Activated B cell treated with CpG ODN at 0.5 μM for 24 hours (primary cell): ENCODE measurements at regions of chr11 and their contacts with region 1.

Region 1: DNA sequence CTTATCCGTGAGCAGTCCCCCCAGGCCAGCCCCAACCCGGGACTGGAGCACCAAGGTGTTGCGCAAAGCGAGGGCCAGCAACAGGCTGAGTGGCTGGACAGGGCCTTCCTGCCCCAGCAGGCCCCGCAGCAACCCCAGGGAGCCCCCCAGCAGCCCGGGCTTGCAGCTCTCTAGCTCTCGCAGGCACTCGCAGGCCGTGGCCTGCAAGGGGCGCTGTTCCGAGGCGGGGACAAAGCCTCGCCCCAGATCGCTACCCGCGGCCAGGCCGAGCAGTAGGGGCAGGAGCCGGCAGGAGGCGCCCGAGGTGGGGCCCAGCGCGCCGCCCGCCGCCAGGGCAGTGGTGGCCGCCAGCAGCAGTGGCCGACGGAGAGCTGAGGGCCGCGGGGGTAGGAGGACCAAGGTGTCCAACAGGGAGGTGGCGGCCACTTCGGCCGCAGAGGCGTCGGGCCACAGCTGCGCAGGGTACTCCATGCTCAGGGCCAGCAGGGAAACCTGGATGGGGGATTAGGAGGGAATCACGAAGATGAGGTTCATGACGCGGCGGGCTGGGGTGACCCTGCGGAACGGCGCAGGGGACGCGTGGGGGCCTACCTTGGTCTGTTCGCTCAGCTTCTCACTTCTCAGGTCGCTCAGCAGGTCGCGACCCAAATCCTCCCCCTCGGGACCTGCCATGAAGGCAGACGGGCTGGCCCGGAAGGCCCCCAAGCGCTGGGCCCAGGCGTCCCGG is 762 bp downstream of the AP5B1 start:
- DNase-seq: peak; percentile 78
- ATAC-seq: peak; percentile 63
- H3K4me3 Mint-ChIP-seq: peak overlapping the region; percentile 86
- H3K27ac Mint-ChIP-seq: peak overlapping the region; percentile 59
- H3K4me1 Mint-ChIP-seq: peaks cover 13% of the 10 kb centered on the region
- H3K27me3 Mint-ChIP-seq: no peaks in the 10 kb centered on the region
- CTCF ChIP-seq: no peak

Region 2: GRCh38 chr11:65720237-65720934 is 59.6 kb before region 1 on chr11 and contains the start of gene RNASEH2C:
- CTCF ChIA-PET with region 1: interaction called, 4 read pairs
- POLR2A ChIA-PET with region 1: interaction called, 6 read pairs
- intact Hi-C with region 1: loop called (anchors 2 kb)
- DNase-seq: peak; percentile 75
- ATAC-seq: peak; percentile 92
- H3K4me3 Mint-ChIP-seq: peak within 1 kb of the TSS; percentile 94
- H3K27ac Mint-ChIP-seq: peak within 1 kb of the TSS; percentile 83
- H3K4me1 Mint-ChIP-seq: peaks cover 29% of the 10 kb centered on the region
- H3K27me3 Mint-ChIP-seq: no peaks in the 10 kb centered on the region
- CTCF ChIP-seq: no peak
- total RNA-seq, gene RNASEH2C: 85.3 and 91.4 TPM in 2 replicates

Region 3: GRCh38 chr11:65791691-65792213 is 11.7 kb after region 1 on chr11:
- CTCF ChIA-PET with region 1: interaction called, 41 read pairs
- POLR2A ChIA-PET with region 1: interaction called, 46 read pairs
- intact Hi-C with region 1: loop called (anchors 1 kb)
- DNase-seq: peak; percentile 52
- ATAC-seq: peak; percentile 93
- H3K4me3 Mint-ChIP-seq: no peak overlapping the region
- H3K27ac Mint-ChIP-seq: peak overlapping the region; percentile 80
- H3K4me1 Mint-ChIP-seq: peaks cover 40% of the 10 kb centered on the region
- H3K27me3 Mint-ChIP-seq: peaks cover 6% of the 10 kb centered on the region
- CTCF ChIP-seq: no peak

Region 4: GRCh38 chr11:65802841-65803240 is 22.8 kb after region 1 on chr11:
- CTCF ChIA-PET with region 1: interaction called, 10 read pairs
- POLR2A ChIA-PET with region 1: no interaction called
- intact Hi-C with region 1: no loop called
- DNase-seq: no peak
- ATAC-seq: peak; percentile 49
- H3K4me3 Mint-ChIP-seq: no peak overlapping the region
- H3K27ac Mint-ChIP-seq: no peak overlapping the region
- H3K4me1 Mint-ChIP-seq: peaks cover 7% of the 10 kb centered on the region
- H3K27me3 Mint-ChIP-seq: peaks cover 12% of the 10 kb centered on the region
- CTCF ChIP-seq: no peak

Region 5: DNA sequence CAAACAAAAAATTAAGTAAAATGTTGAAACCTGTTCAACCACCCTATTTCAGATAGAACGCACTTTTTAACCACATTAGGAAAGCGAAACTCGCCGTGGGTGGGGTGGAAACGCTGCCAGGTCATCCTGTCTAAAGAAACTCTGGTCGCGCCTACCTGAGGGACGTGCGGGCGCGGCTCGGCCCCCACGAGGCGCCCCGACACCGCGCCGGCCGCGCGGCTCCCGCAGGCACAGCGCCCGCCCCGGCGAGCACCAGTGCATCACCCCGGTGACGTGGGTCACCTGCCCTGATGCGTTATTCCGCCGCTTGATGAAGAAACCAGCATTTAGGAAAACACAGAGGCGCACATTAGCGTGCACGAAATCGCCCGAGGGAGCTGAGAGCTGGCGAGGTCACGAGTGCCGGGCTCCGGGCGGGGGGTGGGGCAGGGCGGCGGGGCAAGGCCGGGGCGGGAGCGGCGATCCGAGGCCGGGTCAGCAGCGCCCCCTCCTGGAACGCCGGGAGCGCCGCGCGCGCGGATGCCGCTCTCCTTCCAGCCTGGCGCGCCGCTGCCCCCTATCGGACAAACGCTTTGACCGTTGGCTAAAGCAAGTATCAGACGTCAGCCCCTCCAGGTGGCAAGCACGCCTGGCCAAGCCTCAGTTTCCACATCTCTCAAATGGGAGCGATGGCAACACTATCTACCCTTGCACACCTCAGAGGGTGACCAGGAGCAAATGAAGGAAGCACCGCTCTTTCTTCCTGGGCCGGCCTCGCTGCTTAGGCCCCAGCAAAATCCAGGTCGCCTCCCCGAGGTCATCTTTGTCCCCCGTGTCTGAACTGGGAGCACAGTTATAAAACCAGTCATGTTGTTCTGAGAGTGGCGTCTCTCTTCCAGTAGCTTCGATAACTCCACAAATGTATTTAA is 38.1 kb after region 1 on chr11:
- CTCF ChIA-PET with region 1: interaction called, 62 read pairs
- POLR2A ChIA-PET with region 1: interaction called, 26 read pairs
- intact Hi-C with region 1: loop called (anchors 1 kb)
- DNase-seq: peak; percentile 95
- ATAC-seq: peak; percentile 95
- H3K4me3 Mint-ChIP-seq: peak overlapping the region; percentile 77
- H3K27ac Mint-ChIP-seq: peak overlapping the region; percentile 63
- H3K4me1 Mint-ChIP-seq: peaks cover 14% of the 10 kb centered on the region
- H3K27me3 Mint-ChIP-seq: no peaks in the 10 kb centered on the region
- CTCF ChIP-seq: peak; percentile 96

Region 6: DNA sequence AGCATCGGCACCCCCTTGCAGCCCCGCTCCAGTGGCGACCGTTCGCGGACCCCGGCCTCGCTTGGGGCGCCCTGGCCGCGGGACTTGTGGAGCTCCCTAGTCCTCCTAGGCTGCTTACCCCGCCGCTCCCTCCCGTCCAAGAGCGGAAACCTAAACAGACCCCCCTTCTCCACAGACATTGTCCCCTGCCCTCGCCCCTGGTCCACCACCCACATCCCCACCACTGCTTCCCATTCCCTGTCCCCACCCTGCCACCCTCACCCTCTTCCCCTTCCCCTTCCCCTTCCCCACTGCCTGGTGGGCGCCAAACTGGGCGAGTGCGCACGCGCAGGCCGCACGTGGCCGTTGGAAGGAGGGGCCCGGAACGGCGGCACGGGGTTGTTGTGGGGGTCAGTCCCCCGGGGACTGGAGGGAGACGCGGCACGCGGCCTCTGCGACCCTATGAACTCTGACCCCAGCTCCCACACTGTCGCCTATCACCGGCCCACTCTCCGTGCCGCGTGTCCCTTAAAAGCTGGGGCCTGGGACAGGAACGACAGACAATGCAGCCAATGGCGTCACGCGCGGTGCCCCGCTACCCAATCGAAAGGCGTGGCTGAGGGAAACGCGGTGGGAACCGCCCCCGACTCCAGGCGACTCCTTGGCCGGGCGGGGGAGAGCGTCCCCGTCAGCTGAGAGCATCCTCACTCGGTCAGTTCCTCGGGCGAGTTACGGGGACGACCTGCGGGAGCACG is 53.5 kb after region 1 on chr11 and contains the start of gene SNX32:
- CTCF ChIA-PET with region 1: interaction called, 11 read pairs
- POLR2A ChIA-PET with region 1: interaction called, 3 read pairs
- intact Hi-C with region 1: no loop called
- DNase-seq: peak; percentile 92
- ATAC-seq: peak; percentile 99
- H3K4me3 Mint-ChIP-seq: no peak within 1 kb of the TSS
- H3K27ac Mint-ChIP-seq: no peak within 1 kb of the TSS
- H3K4me1 Mint-ChIP-seq: peaks cover 8% of the 10 kb centered on the region
- H3K27me3 Mint-ChIP-seq: no peaks in the 10 kb centered on the region
- CTCF ChIP-seq: no peak
- total RNA-seq, gene SNX32: 0.37 and 1.0 TPM in 2 replicates